ENCODE measurements at regions of chr9 and their contacts with region 1.

Region 1: GRCh38 chr9:68560071-68560844 is 19.6 kb upstream of the TMEM252 start:
- DNase-seq: peak; percentile 87

Region 2: DNA sequence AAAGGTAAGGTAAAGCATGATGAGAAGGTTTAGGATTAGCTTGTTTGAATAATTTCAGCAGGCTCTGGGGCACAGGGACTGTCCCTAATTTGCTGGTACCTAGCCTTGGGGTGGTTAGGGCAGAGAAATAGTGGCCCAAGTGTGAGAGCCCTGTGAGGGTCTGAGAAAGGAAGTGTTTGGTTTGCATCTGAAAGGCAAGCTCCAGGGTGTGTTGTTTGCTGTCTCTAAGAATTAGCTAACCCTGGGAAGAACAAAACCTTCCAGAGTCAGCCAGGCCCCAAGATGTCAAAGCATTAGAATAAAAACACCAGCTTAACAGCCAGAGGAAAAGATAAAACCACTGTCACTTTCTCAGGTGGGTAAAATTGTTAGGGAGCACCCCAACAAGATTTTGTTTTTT is 50.6 kb before region 1 on chr9:
- intact Hi-C with region 1: loop called in 1 of 2 experiments (anchors 5 kb)
- DNase-seq: no peak